Mucosa of descending colon (tissue), 3 donors: ENCODE measurements at regions of chr7 and their contacts with region 1.

Region 1: DNA sequence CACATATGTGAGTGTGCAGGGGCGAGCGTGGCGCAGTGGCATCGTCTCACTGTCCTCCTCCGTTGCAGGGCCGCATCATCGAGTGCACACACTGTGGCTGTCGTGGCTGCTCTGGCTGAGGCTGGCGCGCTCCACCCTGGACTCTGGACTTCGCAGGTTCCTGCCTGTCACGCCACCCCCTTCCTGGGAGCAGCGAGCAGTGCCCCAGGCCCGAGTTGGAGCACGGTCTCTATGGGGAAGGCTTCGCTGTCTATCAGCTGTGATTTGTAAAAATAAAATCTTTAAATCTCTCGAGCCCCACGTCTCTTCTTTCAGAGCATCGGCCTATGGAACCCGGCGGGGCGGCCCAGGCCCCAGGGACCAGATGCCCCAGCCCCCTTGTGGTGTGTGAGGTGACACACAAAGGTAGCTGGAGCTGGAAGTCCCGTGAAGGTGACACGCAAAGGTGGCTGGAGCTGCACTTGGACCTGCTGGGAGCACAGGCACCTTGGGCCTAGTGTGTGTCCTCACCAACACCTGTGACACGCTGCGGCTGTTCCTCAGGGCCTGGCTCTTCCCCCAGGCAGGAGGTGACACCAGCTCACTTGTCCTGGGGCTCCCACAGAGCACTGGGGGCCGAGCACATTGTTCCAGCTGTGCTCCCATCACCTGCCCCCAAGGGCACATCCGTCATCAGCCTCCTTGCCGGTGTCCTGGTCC is 10.7 kb downstream of the BUD31 start:
- DNase-seq: no peak
- ATAC-seq: no peak
- H3K4me3 ChIP-seq: no peak overlapping the region
- H3K4me1 ChIP-seq: peaks cover 4% of the 10 kb centered on the region
- CTCF ChIP-seq: no peak

Region 2: DNA sequence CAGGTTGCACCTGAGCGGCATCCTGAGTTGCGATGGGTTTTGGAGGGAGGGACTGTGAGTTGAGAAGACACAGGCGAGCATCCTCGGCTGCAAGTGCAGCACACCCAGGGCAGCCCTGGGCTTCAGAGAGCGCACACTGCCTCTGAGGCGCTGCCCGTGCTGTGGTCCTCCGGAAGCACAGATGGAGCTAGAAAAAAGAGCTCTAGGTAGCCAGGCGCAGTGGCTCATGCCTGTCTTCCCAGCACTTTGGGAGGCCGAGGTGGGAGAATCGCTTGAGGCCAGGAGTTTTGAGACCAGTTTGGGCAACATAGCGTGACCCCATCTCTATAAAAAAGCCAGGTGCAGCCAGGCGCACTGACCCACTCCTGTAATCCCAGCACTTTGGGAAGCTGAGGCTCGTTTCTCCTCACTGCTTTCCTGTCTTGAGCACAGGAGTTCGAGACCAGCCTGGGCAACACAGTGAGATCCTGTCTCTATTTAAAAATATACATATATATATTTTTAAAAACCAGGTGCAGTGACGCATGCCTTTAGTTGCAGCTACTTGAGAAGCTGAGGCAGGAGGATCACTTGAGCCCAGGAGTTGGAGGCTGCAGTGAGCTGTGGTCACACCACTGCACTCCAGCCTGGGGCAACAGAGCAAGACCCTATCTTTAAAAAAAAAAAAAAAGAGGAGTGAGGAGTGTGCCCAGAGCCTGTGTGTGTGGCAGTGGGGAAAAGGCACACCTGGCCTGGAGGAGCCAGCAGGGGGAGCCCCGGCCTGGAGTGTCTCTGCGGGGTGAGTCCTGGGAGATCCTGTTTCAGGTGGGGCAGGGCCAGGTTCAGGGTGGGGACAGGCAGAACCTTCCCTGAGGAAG is 54.3 kb before region 1 on chr7:
- intact Hi-C with region 1: loop called (anchors 5 kb)
- DNase-seq: peak; percentile 81 to 89 (median 87)
- ATAC-seq: peak; percentile 97
- H3K4me3 ChIP-seq: no peak overlapping the region
- H3K4me1 ChIP-seq: no peaks in the 10 kb centered on the region
- CTCF ChIP-seq: peak; percentile 60

Region 3: DNA sequence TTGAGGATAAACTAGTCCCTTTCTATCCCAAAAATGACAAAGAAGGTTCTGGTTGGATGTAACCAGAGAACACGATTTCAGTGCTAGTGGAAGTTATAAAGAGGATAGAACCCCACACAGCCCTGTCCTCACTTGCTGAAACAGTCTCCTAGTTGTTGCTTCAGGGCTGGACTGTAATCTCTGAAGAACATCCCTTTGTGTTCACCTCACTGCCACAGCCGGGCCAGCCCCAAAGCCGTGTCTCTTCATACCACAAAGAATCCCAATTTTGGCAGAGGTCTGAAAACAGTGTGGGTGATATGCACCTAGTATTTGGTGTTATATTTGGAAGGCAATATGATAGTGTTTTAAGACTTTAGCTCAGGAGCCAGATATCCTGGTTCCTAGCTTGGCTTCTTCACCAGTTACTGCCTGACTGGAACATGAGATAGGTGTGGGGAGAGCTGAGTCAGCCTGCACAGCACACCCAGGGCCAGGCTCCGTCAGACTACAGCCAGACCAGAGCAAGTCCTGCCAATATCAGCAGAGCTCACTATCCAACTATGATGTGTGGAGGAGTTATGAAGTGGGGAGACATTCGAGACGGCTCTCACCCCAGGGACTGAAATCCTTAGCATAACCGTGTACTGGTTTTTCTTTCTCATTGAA is 343.3 kb after region 1 on chr7:
- intact Hi-C with region 1: no loop called
- DNase-seq: no peak
- ATAC-seq: peak; percentile 54
- H3K4me3 ChIP-seq: no peak overlapping the region
- H3K4me1 ChIP-seq: no peaks in the 10 kb centered on the region
- CTCF ChIP-seq: no peak